Mammary epithelial cell (primary cell): ENCODE measurements at regions of chr9 and their contacts with region 1.

Region 1: DNA sequence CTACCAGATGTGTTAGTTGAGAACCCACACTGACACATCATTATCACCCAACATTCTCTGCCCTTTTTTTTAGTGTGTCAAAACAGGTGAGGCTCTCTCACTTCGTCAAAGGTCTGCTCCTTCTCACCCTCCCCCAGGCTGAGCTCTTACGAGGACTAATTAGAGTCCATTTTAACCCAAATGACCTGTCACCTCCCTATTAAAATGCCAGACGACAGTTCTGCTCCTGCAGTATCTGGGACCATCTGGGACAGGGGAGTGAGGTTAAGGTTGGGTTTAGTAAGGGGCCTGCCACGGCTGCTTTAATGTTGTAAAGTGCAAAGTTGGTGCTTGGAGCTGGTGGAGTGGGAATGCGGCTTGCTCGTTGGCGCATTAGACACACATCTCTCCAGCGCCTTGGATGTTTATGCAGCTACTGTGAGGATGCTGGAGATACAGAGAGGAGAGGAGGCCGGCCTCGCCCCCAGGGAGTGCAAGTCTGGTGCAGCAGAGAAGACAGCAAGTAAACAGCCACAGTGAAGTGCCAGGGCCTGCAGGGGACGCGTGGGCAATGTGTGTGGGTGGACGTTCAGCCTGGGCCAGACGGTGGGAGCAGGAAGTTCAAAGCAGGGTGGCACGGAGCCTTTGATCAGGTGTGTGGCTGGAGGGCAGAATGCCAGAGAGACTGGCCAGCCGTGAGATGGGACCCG is 96.2 kb downstream of the C9orf50 start:
- DNase-seq: no peak
- H3K4me3 ChIP-seq: no peak overlapping the region
- H3K27ac ChIP-seq: no peak overlapping the region
- H3K4me1 ChIP-seq: peaks cover 3% of the 10 kb centered on the region
- H3K27me3 ChIP-seq: no peaks in the 10 kb centered on the region
- CTCF ChIP-seq: no peak

Region 2: GRCh38 chr9:129442803-129443511 is 81.8 kb before region 1 on chr9:
- CTCF ChIA-PET with region 1: no interaction called
- dilution Hi-C with region 1: loop called (anchors 5 kb)
- in situ Hi-C with region 1: no loop called
- intact Hi-C with region 1: no loop called
- DNase-seq: no peak
- H3K4me3 ChIP-seq: no peak overlapping the region
- H3K27ac ChIP-seq: no peak overlapping the region
- H3K4me1 ChIP-seq: no peaks in the 10 kb centered on the region
- H3K27me3 ChIP-seq: peaks cover 3% of the 10 kb centered on the region
- CTCF ChIP-seq: no peak

Region 3: GRCh38 chr9:129567842-129568559 is 43.3 kb after region 1 on chr9:
- CTCF ChIA-PET with region 1: no interaction called
- dilution Hi-C with region 1: no loop called
- in situ Hi-C with region 1: no loop called
- intact Hi-C with region 1: no loop called
- DNase-seq: no peak
- H3K4me3 ChIP-seq: peak overlapping the region; percentile 15 to 42 (median 39)
- H3K27ac ChIP-seq: no peak overlapping the region
- H3K4me1 ChIP-seq: peaks cover 30% of the 10 kb centered on the region
- H3K27me3 ChIP-seq: no peaks in the 10 kb centered on the region
- CTCF ChIP-seq: no peak